Spleen (tissue), 13 donors: ENCODE measurements at regions of chr12 and their contacts with region 1.

Region 1: GRCh38 chr12:120710031-120710804 is at the start of gene UNC119B:
- DNase-seq: peak; percentile 94
- H3K4me3 ChIP-seq: peak within 1 kb of the TSS; percentile 85 to 99 (median 95)
- H3K27ac ChIP-seq: peak within 1 kb of the TSS; percentile 68 to 92 (median 86)
- H3K4me1 ChIP-seq: peaks cover 15 to 54% (median 39%) of the 10 kb centered on the region in 6 donors
- H3K27me3 ChIP-seq: no peaks in the 10 kb centered on the region
- CTCF ChIP-seq: peak in 1 of 11 experiments; percentile 20
- POLR2A ChIP-seq: no peak
- total RNA-seq, gene UNC119B: 13.0 to 32.2 (median 29.8) TPM

Region 2: GRCh38 chr12:120580787-120581723 is 129.2 kb before region 1 on chr12 and contains the start of gene POP5:
- intact Hi-C with region 1: loop called (anchors 5 kb)
- DNase-seq: peak; percentile 98
- H3K4me3 ChIP-seq: peak within 1 kb of the TSS; percentile 69 to 98 (median 88)
- H3K27ac ChIP-seq: peak within 1 kb of the TSS; percentile 46 to 91 (median 78)
- H3K4me1 ChIP-seq: peaks cover 9 to 68% (median 44%) of the 10 kb centered on the region in 6 donors
- H3K27me3 ChIP-seq: peaks cover 0 to 26% (median 0%) of the 10 kb centered on the region in 7 donors
- CTCF ChIP-seq: peak in 2 of 11 experiments; percentile 10 to 31
- POLR2A ChIP-seq: peak in 1 of 3 donors; percentile 47
- total RNA-seq, gene POP5: 28.1 to 54.0 (median 40.1) TPM

Region 3: GRCh38 chr12:120649442-120650232 is 60.6 kb before region 1 on chr12:
- intact Hi-C with region 1: loop called (anchors 2 kb)
- DNase-seq: peak; percentile 68
- H3K4me3 ChIP-seq: peak overlapping the region in 3 of 8 donors; percentile 11 to 54 (median 17)
- H3K27ac ChIP-seq: peak overlapping the region in 1 of 8 donors; percentile 15
- H3K4me1 ChIP-seq: peaks cover 9 to 38% (median 20%) of the 10 kb centered on the region in 6 donors
- H3K27me3 ChIP-seq: peaks cover 0 to 62% (median 10%) of the 10 kb centered on the region in 7 donors
- CTCF ChIP-seq: peak in 7 of 11 experiments; percentile 6 to 57 (median 32)
- POLR2A ChIP-seq: no peak